Dorsolateral prefrontal cortex (tissue), 120 donors: ENCODE measurements at regions of chr12 and their contacts with region 1.

Region 1: DNA sequence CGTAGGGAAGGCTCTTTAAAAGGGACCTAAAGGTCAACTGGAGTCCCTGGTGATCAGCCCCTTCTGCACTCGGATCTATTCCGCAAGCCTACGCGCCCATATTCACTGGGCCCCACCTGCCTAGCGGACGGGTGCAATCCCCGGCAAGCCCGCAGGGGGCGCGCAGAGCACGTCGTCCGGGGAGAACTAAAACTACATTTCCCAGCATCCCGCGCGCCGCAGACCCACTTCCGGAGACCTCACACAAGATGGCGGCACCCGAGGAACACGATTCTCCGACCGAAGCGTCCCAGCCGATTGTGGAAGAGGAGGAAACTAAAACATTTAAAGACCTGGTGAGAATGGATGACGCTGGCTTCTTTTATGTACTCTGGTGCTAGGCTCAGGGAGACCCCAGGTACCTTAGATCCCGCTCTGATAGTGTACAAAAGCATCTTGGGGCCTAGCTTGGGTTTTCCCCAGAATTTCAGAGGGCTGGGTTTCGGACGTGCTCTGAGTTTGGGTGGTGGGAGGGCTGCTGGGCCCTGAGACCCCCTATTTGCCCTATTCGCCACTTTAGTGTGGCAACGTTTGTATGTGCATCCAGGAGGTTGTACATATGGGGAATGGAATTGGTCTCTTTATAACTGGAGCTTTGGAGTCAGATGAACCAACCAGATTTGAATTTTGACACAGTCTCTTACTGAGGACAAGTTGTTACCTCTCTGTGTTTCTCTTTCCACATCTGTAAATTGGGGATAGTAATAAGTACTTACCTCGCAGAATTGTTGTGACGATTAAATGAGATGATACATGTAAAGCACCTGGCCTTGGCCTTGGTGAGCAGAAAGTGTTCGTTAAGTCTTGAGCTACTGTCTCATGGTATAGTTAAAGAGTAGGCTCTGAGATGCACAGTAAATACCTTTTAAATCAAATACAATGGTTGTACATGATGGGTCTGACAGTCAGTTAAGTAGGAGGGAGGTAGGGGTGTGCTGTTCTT is at the start of gene DDX47:
- DNase-seq: peak; percentile 90 to 97 (median 95)
- H3K4me3 ChIP-seq: peak within 1 kb of the TSS; percentile 65 to 100 (median 87)
- H3K27ac ChIP-seq: peak within 1 kb of the TSS in 53 of 59 donors; percentile 1 to 90 (median 67)
- H3K27me3 ChIP-seq: no peaks in the 10 kb centered on the region
- CTCF ChIP-seq: peak; percentile 13 to 100 (median 99)
- total RNA-seq, gene DDX47: 32.0 to 55.7 (median 42.2) TPM

Region 2: GRCh38 chr12:12764824-12765223 is 48.6 kb before region 1 on chr12:
- intact Hi-C with region 1: no loop called
- DNase-seq: no peak
- H3K4me3 ChIP-seq: no peak overlapping the region
- H3K27ac ChIP-seq: no peak overlapping the region
- H3K27me3 ChIP-seq: no peaks in the 10 kb centered on the region
- CTCF ChIP-seq: no peak

Region 3: GRCh38 chr12:12786716-12787601 is 26.5 kb before region 1 on chr12:
- intact Hi-C with region 1: loop called (anchors 1 to 2 kb)
- DNase-seq: peak; percentile 53 to 85 (median 70)
- H3K4me3 ChIP-seq: peak overlapping the region; percentile 47 to 92 (median 81)
- H3K27ac ChIP-seq: peak overlapping the region; percentile 83 to 100 (median 97)
- H3K27me3 ChIP-seq: no peaks in the 10 kb centered on the region
- CTCF ChIP-seq: peak in 43 of 56 donors; percentile 9 to 60 (median 33)

Region 4: GRCh38 chr12:12983420-12984035 is 170.1 kb after region 1 on chr12:
- intact Hi-C with region 1: loop called in 1 of 2 experiments (anchors 5 kb)
- DNase-seq: peak in 2 of 10 donors; percentile 47 to 58
- H3K4me3 ChIP-seq: peak overlapping the region in 1 of 59 donors; percentile 15
- H3K27ac ChIP-seq: peak overlapping the region in 58 of 59 donors; percentile 8 to 87 (median 74)
- H3K27me3 ChIP-seq: no peaks in the 10 kb centered on the region
- CTCF ChIP-seq: peak; percentile 37 to 92 (median 78)

Region 5: DNA sequence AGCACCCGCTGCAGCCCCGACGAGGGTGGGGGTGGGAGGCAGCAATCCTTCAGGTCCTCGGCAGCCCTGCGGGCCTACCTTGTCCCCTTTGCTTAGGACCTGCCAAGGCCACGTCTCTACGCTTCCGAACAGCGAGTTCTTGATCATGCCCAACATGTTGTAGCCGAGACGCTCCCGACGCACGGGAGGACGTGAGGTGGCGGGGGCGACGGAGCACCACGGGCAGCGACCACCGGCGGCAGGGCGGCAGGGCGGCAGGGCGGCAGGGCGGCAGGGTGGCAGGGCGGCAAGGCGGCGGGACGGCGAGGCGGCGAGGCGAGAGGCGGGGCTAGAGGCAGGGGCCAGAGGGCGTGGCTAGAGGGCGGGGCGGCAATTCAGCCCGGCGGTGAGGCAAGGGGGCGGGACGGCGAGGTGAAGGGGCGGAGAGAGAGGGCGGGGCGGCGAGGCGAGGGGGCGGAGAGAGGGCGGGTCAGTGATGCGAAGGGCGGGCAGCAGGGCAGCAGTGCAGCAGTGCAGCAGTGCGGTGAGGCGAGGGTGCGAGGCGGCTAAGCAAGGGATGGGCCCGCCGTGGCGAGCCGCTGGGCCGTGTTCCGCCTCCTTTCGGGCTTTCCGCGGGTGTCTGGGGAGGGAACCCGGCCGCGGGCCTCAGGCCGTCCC is 186.7 kb after region 1 on chr12 and contains the start of gene HEBP1:
- intact Hi-C with region 1: loop called in 1 of 2 experiments (anchors 5 kb)
- DNase-seq: peak; percentile 92 to 99 (median 94)
- H3K4me3 ChIP-seq: peak within 1 kb of the TSS; percentile 55 to 91 (median 82)
- H3K27ac ChIP-seq: peak within 1 kb of the TSS; percentile 51 to 97 (median 92)
- H3K27me3 ChIP-seq: no peaks in the 10 kb centered on the region
- CTCF ChIP-seq: peak in 5 of 56 donors; percentile 6 to 16 (median 9)
- total RNA-seq, gene HEBP1: 24.8 to 61.5 (median 37.8) TPM